Endothelial cell of umbilical vein (primary cell): ENCODE measurements at regions of chr22 and their contacts with region 1.

Region 1: DNA sequence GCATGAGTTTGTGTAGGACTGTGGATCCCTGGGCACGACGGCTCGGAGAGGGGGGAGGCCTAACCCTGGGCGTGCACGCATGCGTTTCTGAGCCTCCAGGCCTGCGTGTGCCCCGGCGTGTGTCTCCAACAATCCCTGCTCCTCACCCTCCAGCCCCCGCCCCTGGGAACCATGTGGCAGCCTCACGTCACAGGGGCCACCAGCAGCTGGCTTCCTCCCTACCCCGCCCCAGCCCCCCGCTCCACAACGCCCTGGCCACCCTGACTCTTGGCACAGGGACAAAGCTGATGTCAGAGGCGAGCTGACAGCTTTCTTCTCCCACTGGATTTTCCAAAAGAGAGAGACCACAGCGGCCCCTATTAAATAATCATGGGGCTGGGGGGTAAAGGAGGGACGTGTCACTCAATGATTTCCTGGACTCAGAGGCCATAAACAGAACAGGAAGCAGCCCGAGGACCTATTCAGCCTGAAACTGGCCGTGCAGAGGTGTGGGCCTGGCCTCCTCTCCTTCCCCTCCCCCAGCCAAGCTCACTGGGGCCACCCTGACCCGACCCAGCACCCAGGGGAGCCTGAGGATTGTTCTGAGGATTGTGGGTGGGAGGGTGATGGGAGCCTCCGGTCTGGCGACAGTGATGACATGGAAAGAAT is 6.8 kb upstream of the LIF start:
- DNase-seq: no peak
- H3K4me3 ChIP-seq: no peak overlapping the region
- H3K27ac ChIP-seq: no peak overlapping the region
- H3K4me1 ChIP-seq: peaks cover 5% of the 10 kb centered on the region
- H3K27me3 ChIP-seq: peaks cover 0 to 4% of the 10 kb centered on the region in 2 experiments
- CTCF ChIP-seq: no peak
- POLR2A ChIP-seq: no peak

Region 2: DNA sequence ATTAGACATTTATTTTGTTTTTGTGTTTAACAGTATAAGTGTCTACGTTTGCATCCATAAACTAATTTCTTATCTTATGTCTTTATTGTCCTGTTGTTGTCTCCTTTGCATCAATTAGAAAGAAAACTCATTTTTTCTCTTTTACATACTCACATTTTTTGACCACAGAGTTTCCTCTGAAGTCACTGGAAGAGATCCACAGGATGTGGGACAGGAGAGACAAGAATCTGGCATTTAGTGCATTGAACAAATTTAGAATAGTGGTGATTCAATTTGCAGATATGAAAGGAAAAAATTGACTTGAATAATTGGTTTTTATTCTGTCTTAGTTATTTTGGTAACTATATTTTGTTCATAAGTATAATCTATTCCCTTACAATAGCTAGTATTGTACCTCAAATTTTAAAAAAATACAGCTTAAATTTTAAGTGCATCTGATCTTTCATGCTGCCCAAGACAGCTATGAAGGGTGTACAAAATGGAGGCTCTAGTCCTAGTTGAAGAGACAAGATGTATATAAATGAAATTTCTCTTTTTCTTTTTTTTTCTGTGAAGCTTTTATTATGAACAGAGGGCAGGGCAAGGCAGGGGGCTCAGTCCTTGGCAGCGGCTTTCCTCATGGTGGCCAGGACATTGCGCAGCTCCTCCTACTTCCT is 148.7 kb before region 1 on chr22:
- CTCF ChIA-PET with region 1: interaction called, 214 read pairs
- POLR2A ChIA-PET with region 1: interaction called, 3 read pairs
- dilution Hi-C with region 1: no loop called
- intact Hi-C with region 1: loop called (anchors 1 kb)
- DNase-seq: no peak
- H3K4me3 ChIP-seq: no peak overlapping the region
- H3K27ac ChIP-seq: no peak overlapping the region
- H3K4me1 ChIP-seq: no peaks in the 10 kb centered on the region
- H3K27me3 ChIP-seq: peaks cover 10 to 44% of the 10 kb centered on the region in 2 experiments
- CTCF ChIP-seq: no peak
- POLR2A ChIP-seq: no peak

Region 3: GRCh38 chr22:30116362-30117117 is 136.8 kb before region 1 on chr22:
- CTCF ChIA-PET with region 1: interaction called, 28 read pairs
- POLR2A ChIA-PET with region 1: no interaction called
- dilution Hi-C with region 1: no loop called
- intact Hi-C with region 1: no loop called
- DNase-seq: no peak
- H3K4me3 ChIP-seq: no peak overlapping the region
- H3K27ac ChIP-seq: no peak overlapping the region
- H3K4me1 ChIP-seq: no peaks in the 10 kb centered on the region
- H3K27me3 ChIP-seq: peaks cover 19 to 20% of the 10 kb centered on the region in 2 experiments
- CTCF ChIP-seq: no peak
- POLR2A ChIP-seq: no peak

Region 4: DNA sequence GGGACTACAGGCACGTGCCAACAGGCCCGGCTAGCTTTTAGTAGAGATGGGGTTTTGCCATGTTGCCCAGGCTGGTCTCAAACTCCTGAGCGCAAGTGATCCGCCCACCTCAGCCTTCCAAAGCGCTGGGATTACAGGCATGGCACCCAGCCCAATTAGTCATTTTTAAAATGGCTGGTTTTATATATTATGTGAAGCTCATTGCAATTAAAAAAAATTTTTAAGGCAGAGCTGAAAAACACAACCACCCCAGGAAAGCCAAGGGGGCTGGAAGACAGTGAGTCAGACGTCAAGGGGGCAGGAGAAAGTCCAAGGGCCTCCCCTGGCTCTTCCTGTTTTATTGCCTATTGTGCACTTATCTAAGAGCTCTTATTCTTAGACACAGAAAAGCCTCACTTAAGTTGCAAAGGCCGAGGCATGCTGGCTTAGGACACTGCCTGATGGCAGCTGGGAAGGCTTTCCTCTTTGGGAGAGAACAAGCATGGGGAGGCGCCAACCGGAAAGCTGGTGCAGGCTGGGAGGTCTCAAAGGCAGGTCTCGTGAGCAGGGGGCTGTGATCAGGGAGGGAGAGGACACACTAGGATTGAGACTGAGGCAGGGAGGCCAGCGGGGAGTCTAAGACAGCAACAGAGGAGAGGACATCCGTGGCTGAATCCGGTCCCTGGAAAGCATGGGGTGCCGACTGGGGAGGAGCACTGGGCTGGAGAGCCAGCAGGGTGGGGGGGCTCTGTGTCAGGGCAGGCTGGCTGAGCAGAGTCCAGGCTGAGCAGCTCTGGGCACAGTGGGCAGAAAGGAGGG is 24.4 kb after region 1 on chr22:
- CTCF ChIA-PET with region 1: interaction called, 15 read pairs
- POLR2A ChIA-PET with region 1: no interaction called
- dilution Hi-C with region 1: no loop called
- intact Hi-C with region 1: no loop called
- DNase-seq: peak; percentile 89
- H3K4me3 ChIP-seq: no peak overlapping the region
- H3K27ac ChIP-seq: peak overlapping the region; percentile 47
- H3K4me1 ChIP-seq: peaks cover 16% of the 10 kb centered on the region
- H3K27me3 ChIP-seq: no peaks in the 10 kb centered on the region
- CTCF ChIP-seq: no peak
- POLR2A ChIP-seq: no peak

Region 5: GRCh38 chr22:30340911-30341685 is 87.8 kb after region 1 on chr22:
- CTCF ChIA-PET with region 1: no interaction called
- POLR2A ChIA-PET with region 1: no interaction called
- dilution Hi-C with region 1: no loop called
- intact Hi-C with region 1: no loop called
- DNase-seq: no peak
- H3K4me3 ChIP-seq: no peak overlapping the region
- H3K27ac ChIP-seq: no peak overlapping the region
- H3K4me1 ChIP-seq: no peaks in the 10 kb centered on the region
- H3K27me3 ChIP-seq: no peaks in the 10 kb centered on the region
- CTCF ChIP-seq: no peak
- POLR2A ChIP-seq: no peak